PC-3 (cell line): ENCODE measurements at regions of chr2 and their contacts with region 1.

Region 1: GRCh38 chr2:238256594-238257104 is 16.8 kb upstream of the HES6 start:
- DNase-seq: peak; percentile 91
- ATAC-seq: peak; percentile 94
- H3K4me3 ChIP-seq: no peak overlapping the region
- H3K27ac ChIP-seq: no peak overlapping the region
- H3K4me1 ChIP-seq: no peaks in the 10 kb centered on the region
- H3K27me3 ChIP-seq: no peaks in the 10 kb centered on the region
- CTCF ChIP-seq: peak; percentile 96

Region 2: DNA sequence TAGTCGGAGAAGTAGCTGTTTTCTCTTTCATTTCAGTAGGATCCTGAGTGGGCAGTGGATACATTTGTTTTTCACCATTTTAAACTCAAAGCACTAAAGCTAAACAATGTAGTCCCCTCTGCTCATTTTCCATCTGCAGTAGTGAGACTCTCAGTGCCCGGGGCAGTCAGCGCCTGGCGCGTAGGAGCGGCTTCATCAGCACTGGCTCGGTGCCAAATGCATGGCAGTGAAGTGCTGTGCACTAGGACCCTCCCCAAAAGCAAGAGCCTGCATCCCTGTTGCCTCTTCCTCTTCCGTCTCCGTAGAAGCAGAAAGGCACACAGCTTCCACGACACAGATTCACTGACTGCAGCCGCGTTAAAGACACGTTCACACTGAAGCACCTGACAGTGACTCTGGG is 175.5 kb before region 1 on chr2:
- CTCF ChIA-PET with region 1: no interaction called
- POLR2A ChIA-PET with region 1: no interaction called
- intact Hi-C with region 1: no loop called
- DNase-seq: no peak
- ATAC-seq: no peak
- H3K4me3 ChIP-seq: no peak overlapping the region
- H3K27ac ChIP-seq: no peak overlapping the region
- H3K4me1 ChIP-seq: peaks cover 11% of the 10 kb centered on the region; the same call in 1 of the 2 replicates
- H3K27me3 ChIP-seq: no peaks in the 10 kb centered on the region
- CTCF ChIP-seq: no peak

Region 3: DNA sequence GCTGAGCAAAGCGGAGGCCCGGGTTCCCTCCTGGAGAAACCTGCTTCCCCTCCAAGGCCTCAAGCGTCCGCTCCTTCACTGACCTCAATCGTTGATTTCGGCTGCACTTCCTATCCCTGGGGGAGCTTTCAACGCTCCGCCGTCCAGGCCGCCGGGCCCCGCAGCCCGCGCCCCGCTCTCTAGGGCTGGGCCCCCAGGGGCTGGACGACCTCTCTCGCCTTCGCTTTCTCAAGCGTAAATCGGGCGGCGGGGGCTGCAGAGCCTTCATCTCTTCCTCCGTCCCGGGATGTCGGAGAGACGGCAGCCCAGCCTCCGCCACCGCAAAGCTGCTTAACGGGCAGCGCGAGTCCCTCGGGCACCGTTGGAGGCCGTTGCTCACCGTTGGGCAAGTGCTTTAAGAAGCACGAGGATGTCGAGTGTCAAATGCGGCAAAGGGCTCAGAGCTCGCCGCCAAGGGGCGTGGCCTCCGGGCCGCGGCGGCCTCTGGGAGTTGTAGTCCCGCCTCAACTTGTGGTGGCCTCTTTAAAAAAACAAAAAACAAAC is 25.3 kb before region 1 on chr2:
- CTCF ChIA-PET with region 1: no interaction called
- POLR2A ChIA-PET with region 1: no interaction called
- intact Hi-C with region 1: no loop called
- DNase-seq: no peak
- ATAC-seq: no peak
- H3K4me3 ChIP-seq: no peak overlapping the region
- H3K27ac ChIP-seq: no peak overlapping the region
- H3K4me1 ChIP-seq: no peaks in the 10 kb centered on the region
- H3K27me3 ChIP-seq: no peaks in the 10 kb centered on the region
- CTCF ChIP-seq: no peak

Region 4: DNA sequence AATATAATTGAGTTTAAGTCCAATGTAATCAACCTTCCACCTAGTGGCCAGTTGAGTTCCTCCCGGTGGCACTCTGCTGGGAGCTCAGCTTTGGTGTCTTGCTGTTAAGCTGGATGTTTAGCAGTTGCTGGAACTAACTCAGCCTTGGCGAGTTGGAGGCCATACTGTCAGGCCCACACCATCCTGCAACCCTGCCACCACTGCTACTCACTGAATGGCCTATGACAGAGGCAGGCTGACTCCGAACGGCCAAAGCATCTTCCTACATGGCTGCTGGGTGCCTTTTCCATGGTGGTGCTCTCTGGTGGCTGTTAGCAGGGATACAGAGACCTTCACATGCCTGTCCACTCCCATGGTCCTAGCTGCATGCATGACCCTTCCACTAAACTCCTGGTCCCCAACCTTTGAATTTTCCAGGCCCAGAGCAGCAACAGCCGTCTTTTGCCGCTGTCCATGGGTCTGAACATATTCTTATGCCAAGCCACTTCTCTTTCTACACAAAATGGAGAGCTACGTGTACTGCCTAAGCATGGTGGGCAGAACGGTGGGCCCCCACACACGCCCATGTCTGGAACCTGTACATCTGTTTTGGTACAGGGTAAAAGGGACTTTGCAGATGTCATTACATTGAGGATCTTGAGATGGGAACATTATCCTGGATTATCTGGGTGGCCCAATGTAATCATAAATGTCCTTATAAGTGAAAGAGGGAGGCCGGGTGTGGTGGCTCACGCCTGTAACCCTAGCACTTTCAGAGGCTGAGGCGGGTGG is 48.6 kb after region 1 on chr2:
- CTCF ChIA-PET with region 1: no interaction called
- POLR2A ChIA-PET with region 1: no interaction called
- intact Hi-C with region 1: loop called (anchors 1 kb)
- DNase-seq: peak; percentile 25
- ATAC-seq: peak; percentile 65
- H3K4me3 ChIP-seq: no peak overlapping the region
- H3K27ac ChIP-seq: no peak overlapping the region
- H3K4me1 ChIP-seq: no peaks in the 10 kb centered on the region
- H3K27me3 ChIP-seq: no peaks in the 10 kb centered on the region
- CTCF ChIP-seq: peak; percentile 65

Region 5: DNA sequence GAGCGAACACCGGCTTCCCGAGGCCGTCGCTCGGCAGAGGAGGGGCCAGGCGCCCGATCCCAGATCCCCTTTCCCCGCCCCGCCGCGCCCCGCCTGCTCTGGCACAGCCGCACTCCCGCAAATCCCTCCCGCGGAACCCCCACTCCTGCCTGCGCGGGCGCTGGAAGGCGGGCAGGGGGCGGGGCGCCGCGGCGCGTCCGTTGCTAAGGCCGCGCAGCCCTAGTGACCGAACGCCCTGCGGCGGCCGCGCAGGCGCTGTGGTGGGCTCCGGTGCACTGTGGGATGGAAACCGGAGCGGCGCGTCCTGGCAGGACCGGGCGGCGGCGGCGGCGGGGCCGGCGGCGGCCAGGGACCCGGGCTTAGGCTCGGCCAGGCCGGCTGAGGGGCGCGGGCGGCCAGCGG is 63.6 kb after region 1 on chr2 and contains the start of gene TRAF3IP1:
- CTCF ChIA-PET with region 1: no interaction called
- POLR2A ChIA-PET with region 1: no interaction called
- intact Hi-C with region 1: loop called (anchors 5 kb)
- DNase-seq: peak; percentile 92
- ATAC-seq: peak; percentile 96
- H3K4me3 ChIP-seq: peak within 1 kb of the TSS; percentile 78
- H3K27ac ChIP-seq: 0 out of 2 replicates have a peak within 1 kb of the TSS, but pooled peaks have one; percentile 20
- H3K4me1 ChIP-seq: 0 out of 2 replicates have a peak, but pooled peaks cover 7% of the 10 kb centered on the region
- H3K27me3 ChIP-seq: no peaks in the 10 kb centered on the region
- CTCF ChIP-seq: no peak
- total RNA-seq, gene TRAF3IP1: 8.2 and 12.0 TPM in 2 replicates